ENCODE measurements at regions of chr2 and their contacts with region 1.

Region 1: DNA sequence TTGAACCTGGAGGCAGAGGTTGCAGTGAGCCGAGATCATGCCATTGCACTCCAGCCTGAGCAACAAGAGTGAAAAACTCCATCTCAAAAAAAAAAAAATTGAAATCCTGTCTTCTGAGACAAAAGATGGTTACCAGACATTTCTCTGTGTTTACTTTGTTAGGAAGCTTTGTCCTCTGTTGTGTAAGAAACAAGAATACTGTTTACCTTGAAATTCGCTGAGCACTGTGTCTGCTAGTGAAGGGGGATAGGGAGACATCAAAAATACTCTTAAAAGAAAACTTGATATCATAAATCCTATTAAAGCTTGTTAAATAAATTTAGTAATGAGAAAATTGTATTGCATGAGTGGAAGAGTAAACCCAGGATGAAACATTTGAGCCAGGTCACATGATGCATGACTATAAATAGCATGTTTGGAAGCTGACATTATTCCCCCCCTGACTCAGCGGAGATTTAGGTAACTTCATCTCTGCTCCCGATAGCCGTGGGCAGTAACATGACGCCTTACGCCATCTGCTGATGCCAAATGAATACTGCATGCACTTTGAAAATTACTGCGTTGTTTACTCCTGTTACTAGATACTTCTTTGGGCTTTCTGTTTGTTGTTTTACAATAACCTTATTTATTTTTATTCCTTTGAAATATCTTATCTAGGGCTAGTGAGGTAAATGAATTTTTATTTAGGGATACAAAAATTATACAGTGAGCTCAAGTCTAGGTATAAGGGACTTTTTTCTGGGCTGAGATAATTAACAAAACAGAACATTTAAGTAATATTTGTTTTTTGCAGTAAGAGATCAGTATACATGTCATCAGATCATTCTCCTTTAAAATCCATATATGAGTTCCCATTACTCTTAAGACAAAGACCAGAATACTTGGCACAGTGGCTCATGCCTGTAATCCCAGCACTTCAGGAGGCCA is 134.9 kb downstream of the MAP3K20 start:
- DNase-seq: peak; percentile 92
- ATAC-seq: peak; percentile 95
- H3K4me3 ChIP-seq: no peak overlapping the region
- H3K27ac ChIP-seq: peak overlapping the region; percentile 67
- H3K4me1 ChIP-seq: peaks cover 24% of the 10 kb centered on the region
- H3K27me3 ChIP-seq: no peaks in the 10 kb centered on the region
- CTCF ChIP-seq: peak; percentile 90

Region 2: GRCh38 chr2:172710584-172711024 is 499.9 kb before region 1 on chr2:
- CTCF ChIA-PET with region 1: no interaction called
- POLR2A ChIA-PET with region 1: no interaction called
- in situ Hi-C with region 1: no loop called
- intact Hi-C with region 1: no loop called
- DNase-seq: no peak
- ATAC-seq: peak; percentile 85
- H3K4me3 ChIP-seq: no peak overlapping the region
- H3K27ac ChIP-seq: no peak overlapping the region
- H3K4me1 ChIP-seq: peaks cover 5% of the 10 kb centered on the region; the same call in 1 of the 2 replicates
- H3K27me3 ChIP-seq: no peaks in the 10 kb centered on the region
- CTCF ChIP-seq: peak; percentile 86

Region 3: GRCh38 chr2:172977270-172978062 is 233.1 kb before region 1 on chr2:
- CTCF ChIA-PET with region 1: no interaction called
- POLR2A ChIA-PET with region 1: no interaction called
- in situ Hi-C with region 1: no loop called
- intact Hi-C with region 1: loop called (anchors 5 kb)
- DNase-seq: no peak
- ATAC-seq: peak; percentile 94
- H3K4me3 ChIP-seq: no peak overlapping the region
- H3K27ac ChIP-seq: peak overlapping the region; percentile 87
- H3K4me1 ChIP-seq: peaks cover 13% of the 10 kb centered on the region
- H3K27me3 ChIP-seq: no peaks in the 10 kb centered on the region
- CTCF ChIP-seq: peak; percentile 90

Region 4: DNA sequence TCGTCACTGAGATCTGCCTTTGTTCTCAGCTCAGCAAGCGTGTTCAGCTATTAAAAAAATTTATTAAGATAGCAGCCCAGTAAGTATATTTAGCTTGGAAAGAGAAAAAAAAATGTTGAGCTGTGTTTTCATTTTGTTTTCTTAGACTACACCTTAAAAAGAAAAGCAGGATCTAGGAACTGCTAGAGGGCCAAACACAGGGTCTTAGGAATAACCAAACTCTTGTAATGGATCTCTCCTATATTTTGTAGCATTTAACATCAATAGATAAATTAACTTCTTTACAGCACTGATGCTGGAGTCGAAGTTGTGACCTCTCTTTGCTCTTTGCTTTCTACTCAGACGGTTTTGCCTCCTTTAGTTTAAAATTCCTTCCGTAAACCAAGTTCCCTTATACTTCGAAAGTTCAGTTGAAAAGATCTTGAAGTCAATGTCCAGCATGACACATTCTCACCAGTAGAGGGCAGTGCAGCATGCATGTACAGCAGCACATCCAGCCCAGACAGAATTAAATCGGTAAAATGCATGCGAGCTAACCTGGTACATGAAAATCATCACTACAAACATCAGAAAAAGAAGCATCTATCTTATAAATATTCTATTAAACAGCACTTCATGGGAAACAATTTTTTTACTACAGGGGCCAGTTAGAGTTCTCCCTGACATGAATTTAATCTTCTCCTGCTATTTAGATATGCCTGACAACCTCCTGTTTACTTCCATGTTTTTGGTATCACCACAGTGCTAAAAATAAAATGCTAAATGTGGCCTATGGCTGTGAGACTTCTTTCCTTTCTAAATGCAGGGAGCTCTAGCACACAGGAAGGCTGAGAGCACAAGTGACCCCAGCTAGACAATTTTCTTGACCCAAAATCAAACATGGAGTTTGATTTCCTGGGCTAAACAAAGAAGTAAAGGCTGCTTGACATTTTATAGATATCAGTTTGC is 183.1 kb before region 1 on chr2:
- CTCF ChIA-PET with region 1: interaction called, 6 read pairs
- POLR2A ChIA-PET with region 1: no interaction called
- in situ Hi-C with region 1: no loop called
- intact Hi-C with region 1: loop called (anchors 5 kb)
- DNase-seq: peak; percentile 85
- ATAC-seq: peak; percentile 88
- H3K4me3 ChIP-seq: no peak overlapping the region
- H3K27ac ChIP-seq: peak overlapping the region; percentile 96
- H3K4me1 ChIP-seq: peaks cover 39% of the 10 kb centered on the region
- H3K27me3 ChIP-seq: no peaks in the 10 kb centered on the region
- CTCF ChIP-seq: peak; percentile 88

Region 5: DNA sequence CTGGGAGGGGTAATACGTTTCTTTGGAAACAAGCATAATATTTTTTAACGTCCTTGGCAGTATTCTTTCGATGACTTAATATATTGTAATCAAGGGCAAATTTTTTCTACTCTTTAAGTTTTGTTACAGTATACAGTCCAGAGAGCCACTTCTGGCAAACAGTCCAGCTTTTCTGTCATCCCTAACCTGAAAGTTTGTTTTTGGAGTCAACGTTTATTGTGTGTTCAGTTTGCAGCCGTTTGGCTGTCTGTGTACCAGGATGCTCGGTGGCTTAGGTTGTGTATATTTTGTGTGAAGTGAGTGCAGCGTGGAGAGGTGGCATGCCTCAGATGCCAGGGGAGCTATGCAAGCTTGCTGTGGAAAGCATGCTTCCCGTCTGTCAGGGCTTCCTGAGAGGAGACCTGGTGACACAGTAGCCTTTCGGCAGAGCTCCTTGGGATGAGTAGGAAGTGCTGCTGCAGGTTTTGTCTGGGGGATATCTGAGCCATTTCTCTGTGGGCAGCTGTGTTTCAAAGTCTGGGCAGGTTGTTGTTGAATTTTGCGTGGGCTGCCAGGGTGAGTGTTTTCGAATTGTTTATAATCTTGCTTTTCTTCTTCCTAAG is 120.2 kb before region 1 on chr2:
- CTCF ChIA-PET with region 1: interaction called, 13 read pairs
- POLR2A ChIA-PET with region 1: no interaction called
- in situ Hi-C with region 1: no loop called
- intact Hi-C with region 1: loop called (anchors 5 kb)
- DNase-seq: no peak
- ATAC-seq: peak; percentile 72
- H3K4me3 ChIP-seq: peak overlapping the region; percentile 11 to 32; a peak in 3 of 4 replicates
- H3K27ac ChIP-seq: peak overlapping the region; percentile 100
- H3K4me1 ChIP-seq: peaks cover 85% of the 10 kb centered on the region
- H3K27me3 ChIP-seq: no peaks in the 10 kb centered on the region
- CTCF ChIP-seq: no peak

Region 6: DNA sequence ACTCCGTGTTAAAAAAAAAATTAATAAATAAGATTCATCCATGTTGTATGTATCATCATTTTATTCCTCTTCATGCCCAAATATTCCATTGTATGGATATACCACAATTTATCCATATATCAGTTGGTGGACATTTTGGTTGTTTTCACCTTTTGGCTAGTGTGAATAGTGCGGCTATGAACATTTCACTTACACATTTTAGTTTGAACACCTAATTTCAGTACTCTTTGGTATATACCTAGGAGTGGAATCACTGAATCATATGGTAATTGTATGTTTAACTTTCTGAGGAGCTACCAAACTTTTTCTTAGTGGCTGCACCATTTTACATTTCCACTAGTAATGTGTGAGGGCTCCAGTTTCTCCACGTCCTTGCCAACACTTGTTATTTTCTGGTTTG is 164.1 kb after region 1 on chr2:
- CTCF ChIA-PET with region 1: no interaction called
- POLR2A ChIA-PET with region 1: no interaction called
- in situ Hi-C with region 1: no loop called
- intact Hi-C with region 1: no loop called
- DNase-seq: no peak
- ATAC-seq: no peak
- H3K4me3 ChIP-seq: no peak overlapping the region
- H3K27ac ChIP-seq: no peak overlapping the region
- H3K4me1 ChIP-seq: no peaks in the 10 kb centered on the region
- H3K27me3 ChIP-seq: no peaks in the 10 kb centered on the region
- CTCF ChIP-seq: no peak

Measured in Panc1 (cell line).